ENCODE measurements at regions of chr7 and their contacts with region 1.

Region 1: DNA sequence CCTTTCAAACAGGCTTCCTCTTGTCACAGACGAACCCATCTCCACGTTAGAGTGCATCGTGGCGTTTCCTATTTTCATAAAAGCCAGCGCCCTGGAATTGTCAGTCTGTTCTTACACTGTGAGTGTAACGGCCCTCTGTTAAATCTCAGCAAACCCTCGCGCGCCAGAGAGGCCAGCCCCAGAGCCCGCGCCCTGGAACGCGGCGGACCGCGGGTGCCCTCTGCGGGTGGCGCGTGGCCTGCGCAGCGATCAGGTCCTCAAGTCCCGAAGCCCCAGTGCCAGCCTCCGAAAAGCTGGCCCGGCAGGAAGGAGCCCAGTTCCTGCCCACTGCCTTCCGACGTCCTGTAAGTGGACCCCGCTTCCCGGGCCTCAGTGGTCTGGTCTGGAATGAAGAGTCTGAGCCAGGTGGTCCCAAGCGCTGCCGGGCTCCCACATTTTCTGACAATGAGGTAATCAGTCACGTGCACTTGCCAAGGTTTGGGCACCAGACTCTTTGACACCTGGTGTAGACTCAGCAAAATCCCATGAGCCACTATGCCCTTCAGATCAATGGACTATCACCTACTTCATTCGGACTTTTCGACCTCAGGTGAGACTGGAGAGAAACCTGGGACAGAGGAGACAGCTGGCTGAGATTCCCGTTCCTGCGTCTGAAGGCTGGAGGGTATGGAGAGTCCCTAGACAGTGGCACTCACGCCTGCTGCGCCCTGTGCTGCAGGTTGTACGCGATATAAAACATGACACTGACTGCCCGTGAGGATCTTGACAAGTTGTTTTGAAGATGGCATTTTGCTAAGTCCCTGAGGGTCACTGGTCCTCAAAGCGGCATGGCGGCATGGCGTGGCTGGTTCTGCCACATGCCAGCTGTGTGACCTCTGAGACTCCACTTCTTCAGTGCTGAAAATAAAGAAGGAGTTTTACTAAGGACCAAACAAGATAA is 109.4 kb upstream of the LANCL2 start:
- DNase-seq: no peak
- H3K4me3 ChIP-seq: peak overlapping the region; percentile 57
- H3K27ac ChIP-seq: peak overlapping the region; percentile 78
- H3K4me1 ChIP-seq: peaks cover 10% of the 10 kb centered on the region
- H3K27me3 ChIP-seq: no peaks in the 10 kb centered on the region
- CTCF ChIP-seq: peak; percentile 79 to 92 (median 84)
- POLR2A ChIP-seq: no peak

Region 2: DNA sequence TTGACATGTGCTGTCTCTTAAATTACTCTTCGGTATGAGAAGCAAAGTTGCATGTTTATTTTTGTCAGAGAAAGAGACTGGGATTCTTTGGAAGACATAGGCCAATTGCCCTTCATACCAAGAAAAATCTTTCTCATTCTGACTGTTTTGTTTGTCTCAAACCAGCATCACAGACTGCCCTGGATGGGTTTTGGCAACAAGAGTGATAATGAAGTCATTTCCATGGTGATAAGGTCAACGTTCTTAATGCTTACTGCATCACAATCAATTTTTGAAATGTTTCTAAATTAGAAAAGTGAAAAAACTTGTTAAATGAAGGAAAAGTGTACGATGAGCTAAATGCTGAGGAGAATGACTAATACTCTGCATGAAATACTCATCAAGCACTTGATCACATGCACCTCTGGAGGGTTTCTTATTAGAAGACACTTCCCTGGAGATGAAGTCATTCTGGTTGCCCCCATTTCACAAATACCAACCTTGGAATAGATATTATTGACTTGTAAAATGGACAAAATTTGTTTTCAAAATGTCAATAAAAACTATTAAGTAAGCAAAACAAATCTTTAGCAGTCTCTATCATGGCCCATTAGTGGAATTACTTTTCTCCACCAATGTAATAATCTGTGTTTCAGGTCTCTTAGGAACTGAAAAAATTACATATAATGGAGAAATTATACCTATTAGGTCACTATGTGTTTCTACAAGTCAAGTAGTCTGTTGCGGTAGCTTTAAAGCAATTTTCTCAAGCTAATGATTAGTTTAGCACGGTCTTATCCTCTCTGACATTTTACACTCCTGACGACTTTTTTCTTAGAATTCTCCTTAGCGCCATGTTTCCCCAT is 476.8 kb before region 1 on chr7:
- intact Hi-C with region 1: loop called (anchors 5 kb)
- DNase-seq: no peak
- H3K4me3 ChIP-seq: no peak overlapping the region
- H3K27ac ChIP-seq: no peak overlapping the region
- H3K4me1 ChIP-seq: no peaks in the 10 kb centered on the region
- H3K27me3 ChIP-seq: no peaks in the 10 kb centered on the region
- CTCF ChIP-seq: no peak
- POLR2A ChIP-seq: no peak

Region 3: DNA sequence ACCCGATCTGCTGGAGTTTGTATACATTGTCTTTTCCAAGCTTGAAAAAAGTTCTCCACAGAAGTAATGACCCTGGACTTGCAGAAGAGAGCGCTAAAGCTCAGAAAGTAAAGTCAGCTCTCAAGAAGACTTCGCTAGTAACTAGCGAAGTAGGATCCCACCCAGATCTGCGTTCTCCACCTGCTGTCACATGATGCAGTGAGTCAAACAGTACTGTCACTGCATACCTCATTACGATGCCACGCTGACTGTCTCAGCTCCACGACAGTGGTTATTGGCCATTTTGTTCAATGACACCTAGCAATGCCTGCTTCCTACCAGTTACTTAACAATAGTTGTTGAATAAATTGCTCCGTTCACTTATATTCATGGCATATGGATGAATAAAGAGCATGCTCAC is 467.1 kb before region 1 on chr7:
- intact Hi-C with region 1: loop called (anchors 5 kb)
- DNase-seq: no peak
- H3K4me3 ChIP-seq: no peak overlapping the region
- H3K27ac ChIP-seq: no peak overlapping the region
- H3K4me1 ChIP-seq: peaks cover 10% of the 10 kb centered on the region
- H3K27me3 ChIP-seq: no peaks in the 10 kb centered on the region
- CTCF ChIP-seq: peak; percentile 5 to 61 (median 55)
- POLR2A ChIP-seq: no peak

Region 4: GRCh38 chr7:55018361-55019190 is 237.2 kb before region 1 on chr7 and contains the start of gene EGFR:
- intact Hi-C with region 1: loop called (anchors 10 kb)
- DNase-seq: no peak
- H3K4me3 ChIP-seq: peak within 1 kb of the TSS; percentile 57 to 98
- H3K27ac ChIP-seq: peak within 1 kb of the TSS; percentile 89
- H3K4me1 ChIP-seq: peaks cover 40% of the 10 kb centered on the region
- H3K27me3 ChIP-seq: no peaks in the 10 kb centered on the region
- CTCF ChIP-seq: no peak
- POLR2A ChIP-seq: peak in 1 of 2 donors; percentile 98
- total RNA-seq, gene EGFR: 130 TPM